Psoas muscle (tissue), 8 donors: ENCODE measurements at regions of chr6 and their contacts with region 1.

Region 1: DNA sequence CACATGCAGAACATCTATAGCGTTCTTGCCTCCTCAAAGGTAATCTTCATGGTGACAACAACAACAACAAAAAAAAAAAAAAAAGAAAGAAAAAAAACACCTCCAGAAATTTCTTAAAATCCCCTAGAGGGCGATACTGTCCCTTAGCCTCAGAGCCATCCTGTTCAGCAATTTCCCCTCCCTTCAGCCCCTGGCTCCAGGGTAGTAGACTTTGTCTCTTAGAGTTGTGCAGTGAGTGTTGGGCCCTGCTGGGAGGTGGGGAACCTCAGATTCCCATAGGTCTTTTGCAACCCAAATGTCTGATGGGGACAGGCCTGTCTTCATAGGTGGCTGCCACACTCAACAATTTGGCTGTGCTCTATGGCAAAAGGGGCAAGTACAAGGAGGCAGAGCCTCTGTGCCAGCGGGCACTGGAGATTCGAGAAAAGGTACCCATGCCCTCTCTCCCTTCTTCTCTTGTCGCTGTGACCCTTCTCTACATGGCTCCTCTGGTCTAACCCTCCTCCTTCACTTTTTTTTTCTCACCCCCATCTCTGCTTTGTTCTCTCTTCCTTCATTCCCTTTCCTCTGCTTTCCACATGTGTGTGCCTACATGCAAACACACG is 6.0 kb upstream of the PTK7 start:
- DNase-seq: no peak
- ATAC-seq: peak in 2 of 4 donors; percentile 36 to 50
- H3K4me3 ChIP-seq: no peak overlapping the region
- H3K27ac ChIP-seq: no peak overlapping the region
- H3K4me1 ChIP-seq: no peaks in the 10 kb centered on the region
- H3K27me3 ChIP-seq: peaks cover 0 to 3% (median 0%) of the 10 kb centered on the region in 3 donors
- CTCF ChIP-seq: peak; percentile 11

Region 2: GRCh38 chr6:43120944-43121913 is 51.1 kb after region 1 on chr6:
- intact Hi-C with region 1: loop called in 1 of 2 experiments (anchors 5 kb)
- DNase-seq: peak; percentile 75 to 86
- ATAC-seq: peak; percentile 42 to 76 (median 66)
- H3K4me3 ChIP-seq: no peak overlapping the region
- H3K27ac ChIP-seq: peak overlapping the region; percentile 30
- H3K4me1 ChIP-seq: no peaks in the 10 kb centered on the region
- H3K27me3 ChIP-seq: no peaks in the 10 kb centered on the region
- CTCF ChIP-seq: no peak

Region 3: GRCh38 chr6:43143235-43144124 is 73.3 kb after region 1 on chr6:
- intact Hi-C with region 1: loop called in 1 of 2 experiments (anchors 5 kb)
- DNase-seq: peak; percentile 86 to 93
- ATAC-seq: peak; percentile 92 to 96 (median 94)
- H3K4me3 ChIP-seq: peak overlapping the region; percentile 10
- H3K27ac ChIP-seq: peak overlapping the region; percentile 13
- H3K4me1 ChIP-seq: peaks cover 21% of the 10 kb centered on the region
- H3K27me3 ChIP-seq: no peaks in the 10 kb centered on the region
- CTCF ChIP-seq: peak; percentile 95